ENCODE measurements at regions of chr15 and their contacts with region 1.

Region 1: DNA sequence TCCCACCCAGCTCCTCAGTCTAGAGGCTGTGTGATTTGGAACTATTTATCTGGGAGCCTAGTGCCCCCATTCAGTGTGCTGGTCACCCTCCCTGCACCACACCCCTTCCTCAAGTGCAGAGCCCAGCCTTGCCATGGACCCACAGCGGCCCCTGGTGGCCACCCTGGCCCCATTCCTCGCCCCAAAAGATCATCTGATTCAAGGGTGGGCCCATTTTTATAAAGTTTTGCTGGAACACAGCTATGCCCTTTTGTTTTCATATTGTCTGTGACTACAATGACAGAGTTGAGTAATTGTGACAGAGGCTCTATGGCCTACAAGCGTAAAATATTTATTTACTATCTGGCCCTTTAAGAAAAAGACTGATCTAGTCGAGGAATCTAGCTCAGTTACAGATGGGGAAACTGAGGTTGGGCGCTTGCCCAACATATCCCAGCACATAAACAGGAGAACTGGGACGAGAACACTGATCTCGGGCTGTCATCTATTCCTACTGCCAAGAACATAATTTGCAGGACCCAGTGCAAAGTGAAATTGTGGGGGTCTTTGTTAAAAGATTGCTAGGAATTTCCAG is 1.8 kb downstream of the FES start:
- DNase-seq: peak; percentile 79 to 91 (median 84)
- ATAC-seq: peak; percentile 54 to 79 (median 63)
- H3K4me3 ChIP-seq: peak overlapping the region in 11 of 12 donors; percentile 43 to 86 (median 72)
- H3K27ac ChIP-seq: peak overlapping the region; percentile 88 to 99 (median 96)
- H3K4me1 ChIP-seq: peaks cover 0 to 59% (median 37%) of the 10 kb centered on the region in 12 donors
- H3K27me3 ChIP-seq: no peaks in the 10 kb centered on the region
- CTCF ChIP-seq: peak; percentile 95 to 100 (median 98)
- POLR2A ChIP-seq: no peak

Region 2: DNA sequence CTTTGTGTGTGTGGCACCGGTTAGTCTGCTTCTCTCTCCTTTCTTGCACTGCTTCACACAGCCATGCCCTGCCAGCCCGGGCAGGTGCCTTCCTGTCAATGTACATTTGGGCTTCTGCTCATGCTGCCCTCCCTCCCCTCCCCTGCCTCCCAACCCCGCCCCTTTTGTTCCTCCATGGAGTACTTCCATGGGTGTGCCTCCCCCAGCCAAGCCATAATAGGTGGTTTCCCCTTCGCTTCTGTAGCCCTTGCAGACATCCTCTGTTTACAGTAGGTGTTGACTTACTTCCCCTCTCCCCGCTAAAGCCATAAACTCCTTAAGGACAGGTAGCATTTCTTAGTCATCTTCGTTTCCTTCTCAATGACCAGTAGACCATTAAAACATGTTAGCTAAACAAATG is 388.2 kb before region 1 on chr15:
- intact Hi-C with region 1: loop called in 1 of 10 experiments (anchors 10 kb)
- DNase-seq: no peak
- ATAC-seq: peak in 2 of 4 donors; percentile 35 to 56
- H3K4me3 ChIP-seq: no peak overlapping the region
- H3K27ac ChIP-seq: no peak overlapping the region
- H3K4me1 ChIP-seq: peaks cover 0 to 14% (median 6%) of the 10 kb centered on the region in 12 donors
- H3K27me3 ChIP-seq: no peaks in the 10 kb centered on the region
- CTCF ChIP-seq: no peak
- POLR2A ChIP-seq: no peak

Region 3: GRCh38 chr15:90648137-90649070 is 237.7 kb before region 1 on chr15:
- intact Hi-C with region 1: loop called (anchors 1 to 2 kb)
- DNase-seq: peak; percentile 61 to 79 (median 75)
- ATAC-seq: peak; percentile 66 to 89 (median 74)
- H3K4me3 ChIP-seq: peak overlapping the region in 1 of 12 donors; percentile 2
- H3K27ac ChIP-seq: peak overlapping the region; percentile 16 to 80 (median 58)
- H3K4me1 ChIP-seq: peaks cover 0 to 31% (median 15%) of the 10 kb centered on the region in 12 donors
- H3K27me3 ChIP-seq: no peaks in the 10 kb centered on the region
- CTCF ChIP-seq: peak; percentile 80 to 97 (median 93)
- POLR2A ChIP-seq: no peak

Region 4: DNA sequence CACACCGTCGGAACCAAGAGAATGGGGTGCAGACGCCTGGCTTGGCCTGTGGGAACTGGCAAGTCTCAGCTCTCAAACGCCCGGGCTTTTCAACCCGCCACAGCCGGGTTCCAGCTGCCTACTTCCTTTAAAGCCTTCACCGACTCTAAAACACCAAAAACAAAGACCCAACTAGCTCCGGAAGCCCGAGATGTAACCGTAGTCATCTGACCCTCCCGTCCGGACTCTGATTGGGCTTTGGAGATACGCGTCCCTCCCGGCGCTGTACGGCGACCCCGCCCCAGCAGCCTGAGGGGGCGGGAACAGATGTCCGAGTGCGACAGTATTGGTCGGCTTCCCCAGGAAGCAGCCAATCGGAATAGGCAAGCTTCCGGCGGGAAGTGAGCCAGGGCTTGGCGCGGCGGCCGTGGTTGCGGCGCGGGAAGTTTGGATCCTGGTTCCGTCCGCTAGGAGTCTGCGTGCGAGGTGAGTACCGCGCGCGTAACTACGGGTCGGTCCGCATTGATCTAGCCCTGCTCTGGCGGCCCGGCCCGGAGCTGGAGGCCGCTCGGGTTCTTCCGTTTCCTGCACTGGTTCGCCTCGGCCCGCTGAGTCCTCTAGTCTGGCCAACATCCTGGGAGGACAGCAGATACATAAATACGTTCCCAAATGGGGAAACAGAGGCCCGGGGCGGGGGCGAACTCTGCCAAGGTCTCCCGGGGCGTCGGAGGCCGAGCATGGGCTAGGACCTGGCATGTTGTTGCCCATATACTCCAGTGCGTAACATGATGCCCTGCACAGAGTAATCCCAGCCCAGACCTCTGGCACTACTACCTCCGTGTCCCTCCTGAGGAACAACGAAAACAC is 168.9 kb before region 1 on chr15 and contains the start of gene BLM:
- intact Hi-C with region 1: loop called in 9 of 10 experiments (anchors 2 to 10 kb)
- DNase-seq: peak; percentile 95 to 98 (median 96)
- ATAC-seq: peak; percentile 100
- H3K4me3 ChIP-seq: peak within 1 kb of the TSS; percentile 9 to 83 (median 66)
- H3K27ac ChIP-seq: peak within 1 kb of the TSS; percentile 68 to 97 (median 88)
- H3K4me1 ChIP-seq: peaks cover 0 to 25% (median 10%) of the 10 kb centered on the region in 12 donors
- H3K27me3 ChIP-seq: no peaks in the 10 kb centered on the region
- CTCF ChIP-seq: peak in 11 of 12 donors; percentile 18 to 54 (median 39)
- POLR2A ChIP-seq: peak in 1 of 2 donors; percentile 78
- total RNA-seq, gene BLM: 4.3 to 39.6 (median 12.2) TPM

Region 5: DNA sequence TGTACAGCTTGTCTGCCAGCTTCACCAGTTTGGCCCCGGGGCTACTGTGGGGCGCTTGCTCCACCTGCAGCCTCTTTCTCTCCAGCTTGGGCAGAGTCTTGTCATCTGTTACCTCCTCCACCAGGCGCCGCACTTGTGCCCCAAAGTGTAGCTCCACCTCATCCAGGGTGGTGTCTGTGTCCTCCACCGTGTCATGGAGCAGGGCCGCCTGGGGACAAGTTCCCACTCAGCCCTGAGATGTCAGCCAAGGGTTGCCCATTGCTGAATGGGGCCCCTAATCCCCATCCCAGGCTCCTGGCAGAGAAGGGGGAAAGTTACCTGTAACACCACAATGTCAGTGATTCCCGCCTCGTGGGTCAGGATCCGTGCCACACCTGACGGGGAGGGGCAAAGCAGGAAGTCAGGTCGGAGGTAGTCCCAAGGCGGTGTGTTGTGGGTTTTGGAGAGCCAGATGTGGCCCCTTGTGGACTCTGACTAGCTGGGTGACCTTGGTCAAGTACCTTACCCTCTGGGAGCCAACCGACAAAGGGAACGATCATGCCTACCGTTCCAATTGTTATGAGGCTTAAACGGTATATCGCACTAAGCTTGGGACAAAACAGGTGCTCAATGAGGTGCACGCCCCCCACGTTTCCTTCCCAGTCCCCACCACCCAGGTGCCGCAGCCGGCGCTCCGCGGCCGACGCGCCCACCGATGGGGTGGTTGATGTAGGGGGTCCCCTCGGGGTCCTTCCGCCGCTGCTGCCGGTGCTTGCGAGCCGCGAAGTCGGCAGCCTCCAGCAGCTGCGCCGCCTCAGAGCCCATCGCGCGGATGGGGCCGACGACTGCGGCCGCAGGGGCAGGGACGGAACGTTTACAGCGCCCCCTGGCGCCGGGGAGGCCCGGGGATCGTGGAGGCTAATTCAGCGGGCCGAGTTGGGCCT is 45.9 kb after region 1 on chr15 and contains the start of gene HDDC3:
- intact Hi-C with region 1: loop called in 3 of 10 experiments (anchors 5 kb)
- DNase-seq: peak; percentile 90 to 96 (median 93)
- ATAC-seq: peak; percentile 42 to 66 (median 65)
- H3K4me3 ChIP-seq: peak within 1 kb of the TSS; percentile 48 to 95 (median 86)
- H3K27ac ChIP-seq: peak within 1 kb of the TSS; percentile 89 to 97 (median 96)
- H3K4me1 ChIP-seq: peaks cover 11 to 67% (median 47%) of the 10 kb centered on the region in 12 donors
- H3K27me3 ChIP-seq: no peaks in the 10 kb centered on the region
- CTCF ChIP-seq: peak; percentile 94 to 99 (median 97)
- POLR2A ChIP-seq: peak in 1 of 2 donors; percentile 28
- total RNA-seq, gene HDDC3: 10.9 to 19.9 (median 15.2) TPM

Measured in heart left ventricle (tissue), 16 donors.